Activated CD8-positive, alpha-beta T cell treated with anti-CD3 and anti-CD28 coated beads, Interleukin-2, amount 10 ng/mL, durations not matched to agents 7 days and 5 days (primary cell): ENCODE measurements at regions of chr7 and their contacts with region 1.

Region 1: GRCh38 chr7:116180302-116180701 is 30.0 kb upstream of the TES start:
- DNase-seq: peak; percentile 39
- ATAC-seq: peak; percentile 72
- H3K4me3 Mint-ChIP-seq: no peak overlapping the region
- H3K27ac Mint-ChIP-seq: no peak overlapping the region
- H3K4me1 Mint-ChIP-seq: no peaks in the 10 kb centered on the region
- H3K27me3 Mint-ChIP-seq: peaks cover 9% of the 10 kb centered on the region

Region 2: GRCh38 chr7:116128139-116128538 is 52.2 kb before region 1 on chr7:
- CTCF ChIA-PET with region 1: no interaction called
- POLR2A ChIA-PET with region 1: no interaction called
- DNase-seq: no peak
- ATAC-seq: no peak
- H3K4me3 Mint-ChIP-seq: no peak overlapping the region
- H3K27ac Mint-ChIP-seq: no peak overlapping the region
- H3K4me1 Mint-ChIP-seq: no peaks in the 10 kb centered on the region
- H3K27me3 Mint-ChIP-seq: peaks cover 29% of the 10 kb centered on the region

Region 3: GRCh38 chr7:116138202-116138801 is 42.0 kb before region 1 on chr7:
- CTCF ChIA-PET with region 1: interaction called, 14 read pairs
- POLR2A ChIA-PET with region 1: no interaction called
- DNase-seq: peak; percentile 64
- ATAC-seq: peak; percentile 92
- H3K4me3 Mint-ChIP-seq: no peak overlapping the region
- H3K27ac Mint-ChIP-seq: no peak overlapping the region
- H3K4me1 Mint-ChIP-seq: peaks cover 34% of the 10 kb centered on the region
- H3K27me3 Mint-ChIP-seq: peaks cover 16% of the 10 kb centered on the region

Region 4: DNA sequence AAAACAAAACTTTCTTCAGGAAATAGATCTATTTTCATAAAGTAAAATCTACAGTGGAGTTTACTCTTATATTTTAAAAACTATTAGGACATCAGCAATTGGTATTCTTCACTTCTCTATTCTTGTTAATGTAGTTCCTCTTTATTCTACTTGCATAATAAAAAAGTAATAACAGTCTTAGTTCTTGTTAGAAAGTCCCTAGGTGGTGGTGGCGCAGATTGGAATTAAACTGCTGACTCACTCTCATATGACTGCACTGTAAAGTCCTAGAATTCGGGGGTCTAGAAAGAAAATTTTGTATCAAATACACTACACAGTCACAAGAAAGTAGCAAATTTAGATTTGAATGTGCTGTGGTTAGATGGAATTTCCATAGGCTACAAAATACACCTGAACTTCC is 14.6 kb before region 1 on chr7:
- CTCF ChIA-PET with region 1: interaction called, 26 read pairs
- POLR2A ChIA-PET with region 1: no interaction called
- DNase-seq: no peak
- ATAC-seq: no peak
- H3K4me3 Mint-ChIP-seq: no peak overlapping the region
- H3K27ac Mint-ChIP-seq: no peak overlapping the region
- H3K4me1 Mint-ChIP-seq: peaks cover 40% of the 10 kb centered on the region
- H3K27me3 Mint-ChIP-seq: peaks cover 14% of the 10 kb centered on the region

Region 5: DNA sequence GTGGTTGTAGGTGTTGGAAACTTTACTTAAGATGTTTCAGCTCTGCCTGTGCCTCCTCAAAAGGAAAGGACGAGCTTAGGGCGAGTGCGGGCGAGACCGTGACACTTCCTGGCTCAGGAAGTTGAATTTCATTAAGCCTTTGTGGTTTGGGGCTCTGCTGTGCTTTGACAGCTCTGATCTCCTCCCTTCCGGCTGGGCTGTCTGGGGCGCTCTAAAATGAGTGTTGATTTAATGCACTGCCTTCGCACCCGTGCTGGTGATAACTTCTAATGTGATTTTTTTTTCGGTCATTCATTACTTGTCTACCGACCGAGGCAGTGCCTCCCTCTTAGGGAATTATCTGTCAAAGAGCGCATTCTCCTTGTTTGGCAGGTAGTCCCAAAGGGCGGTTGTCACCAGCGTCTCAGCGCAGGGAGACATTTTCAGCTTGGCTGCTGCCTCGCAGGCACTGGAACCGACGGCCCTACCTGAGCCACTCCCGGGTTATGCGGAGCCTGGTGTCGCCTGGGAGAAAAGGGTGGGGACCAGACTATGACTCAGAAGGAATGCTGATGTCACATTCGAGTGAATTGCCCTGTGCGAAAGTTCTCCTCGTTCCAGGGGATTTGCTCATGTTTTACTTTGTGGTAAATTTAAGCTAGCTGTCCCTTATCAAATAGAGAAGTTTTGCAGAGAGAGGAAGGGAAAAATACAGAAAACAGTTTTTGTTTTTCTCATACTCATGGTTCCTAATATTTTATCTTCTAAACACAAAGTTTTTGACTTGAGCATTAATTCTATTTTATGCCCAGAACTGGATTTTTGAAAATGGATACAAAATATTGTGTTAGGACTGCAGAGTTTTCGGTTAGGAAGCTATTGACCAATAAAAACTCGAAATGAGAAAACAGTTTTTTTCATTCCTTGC is 31.0 kb after region 1 on chr7:
- CTCF ChIA-PET with region 1: interaction called, 30 read pairs
- POLR2A ChIA-PET with region 1: interaction called, 3 read pairs
- DNase-seq: peak; percentile 84
- ATAC-seq: peak; percentile 80
- H3K4me3 Mint-ChIP-seq: peak overlapping the region; percentile 95
- H3K27ac Mint-ChIP-seq: peak overlapping the region; percentile 97
- H3K4me1 Mint-ChIP-seq: peaks cover 49% of the 10 kb centered on the region
- H3K27me3 Mint-ChIP-seq: peaks cover 2% of the 10 kb centered on the region

Region 6: GRCh38 chr7:116218051-116218645 is 37.8 kb after region 1 on chr7:
- CTCF ChIA-PET with region 1: interaction called, 17 read pairs
- POLR2A ChIA-PET with region 1: interaction called, 6 read pairs
- DNase-seq: no peak
- ATAC-seq: no peak
- H3K4me3 Mint-ChIP-seq: no peak overlapping the region
- H3K27ac Mint-ChIP-seq: no peak overlapping the region
- H3K4me1 Mint-ChIP-seq: peaks cover 71% of the 10 kb centered on the region
- H3K27me3 Mint-ChIP-seq: no peaks in the 10 kb centered on the region

Region 7: DNA sequence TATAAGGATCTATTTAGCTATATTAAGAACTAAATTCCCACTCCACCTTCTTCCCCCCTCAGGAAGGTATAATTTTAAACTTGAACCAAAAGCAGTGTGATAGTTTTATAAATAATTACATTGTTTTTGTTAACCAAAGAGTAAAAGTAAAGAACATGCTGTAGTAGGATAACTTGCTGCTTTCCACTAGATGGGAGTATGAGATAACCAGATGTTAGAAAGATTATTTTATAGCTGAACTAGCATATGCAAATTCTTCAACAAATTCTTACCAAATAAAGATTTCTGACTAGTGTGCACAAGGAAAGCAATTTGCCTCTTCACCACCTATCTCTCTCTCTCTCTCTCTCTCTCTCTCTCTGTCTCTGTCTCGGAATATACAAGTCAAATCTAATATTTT is 61.9 kb after region 1 on chr7:
- CTCF ChIA-PET with region 1: interaction called, 212 read pairs
- POLR2A ChIA-PET with region 1: no interaction called
- DNase-seq: no peak
- ATAC-seq: no peak
- H3K4me3 Mint-ChIP-seq: no peak overlapping the region
- H3K27ac Mint-ChIP-seq: no peak overlapping the region
- H3K4me1 Mint-ChIP-seq: peaks cover 13% of the 10 kb centered on the region
- H3K27me3 Mint-ChIP-seq: no peaks in the 10 kb centered on the region

Region 8: DNA sequence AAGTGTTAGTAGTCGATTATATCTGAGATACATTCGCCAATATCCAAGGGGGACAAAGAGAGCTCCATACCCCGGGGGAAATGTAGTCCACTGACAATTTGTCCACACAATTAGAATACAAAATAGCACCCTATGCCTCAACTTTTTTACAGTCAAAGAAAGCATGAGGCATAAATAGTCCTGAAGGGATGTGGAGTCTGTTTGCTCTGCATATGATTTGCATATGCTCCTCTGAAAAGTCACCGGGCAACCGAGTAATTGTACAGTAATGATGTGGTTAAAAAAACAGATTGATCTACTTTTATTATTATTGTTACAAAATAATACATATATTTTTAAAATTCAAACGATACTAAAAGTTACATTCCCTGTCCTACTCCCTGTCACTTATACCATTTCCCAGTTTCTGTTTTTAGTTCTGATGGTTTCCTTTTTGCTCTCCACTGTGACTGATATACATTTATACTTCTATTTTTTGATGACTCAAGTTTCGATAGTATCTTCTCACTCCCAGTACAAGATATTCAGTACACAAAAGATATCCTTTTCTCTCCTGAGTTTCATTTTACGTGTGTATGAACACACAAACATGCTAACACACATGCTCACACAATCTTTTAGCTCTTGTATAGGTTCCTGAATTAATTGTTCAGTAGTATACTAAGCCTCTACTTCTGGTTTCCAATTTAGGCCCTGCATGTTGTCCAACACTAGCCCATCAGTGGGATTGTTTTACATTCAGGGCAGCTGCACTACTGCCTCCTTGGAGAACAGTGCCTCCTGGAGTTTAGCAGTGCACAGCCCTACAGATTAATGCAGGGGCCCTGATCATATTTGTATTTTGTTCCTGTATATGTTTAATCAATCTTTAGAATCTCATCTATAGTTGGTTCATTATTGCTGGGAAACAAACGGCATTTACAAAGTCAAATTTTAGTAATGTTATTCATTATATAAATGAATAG is 160.9 kb after region 1 on chr7:
- CTCF ChIA-PET with region 1: no interaction called
- POLR2A ChIA-PET with region 1: no interaction called
- DNase-seq: no peak
- ATAC-seq: no peak
- H3K4me3 Mint-ChIP-seq: no peak overlapping the region
- H3K27ac Mint-ChIP-seq: no peak overlapping the region
- H3K4me1 Mint-ChIP-seq: no peaks in the 10 kb centered on the region
- H3K27me3 Mint-ChIP-seq: peaks cover 2% of the 10 kb centered on the region